MCF 10A (cell line): ENCODE measurements at regions of chr4 and their contacts with region 1.

Region 1: GRCh38 chr4:108683479-108683878 is 33.1 kb downstream of the OSTC start:
- DNase-seq: peak; percentile 53
- H3K4me3 Mint-ChIP-seq: no peak overlapping the region
- H3K27ac Mint-ChIP-seq: no peak overlapping the region
- H3K4me1 Mint-ChIP-seq: no peaks in the 10 kb centered on the region
- H3K27me3 Mint-ChIP-seq: no peaks in the 10 kb centered on the region
- CTCF ChIP-seq: peak; percentile 30

Region 2: DNA sequence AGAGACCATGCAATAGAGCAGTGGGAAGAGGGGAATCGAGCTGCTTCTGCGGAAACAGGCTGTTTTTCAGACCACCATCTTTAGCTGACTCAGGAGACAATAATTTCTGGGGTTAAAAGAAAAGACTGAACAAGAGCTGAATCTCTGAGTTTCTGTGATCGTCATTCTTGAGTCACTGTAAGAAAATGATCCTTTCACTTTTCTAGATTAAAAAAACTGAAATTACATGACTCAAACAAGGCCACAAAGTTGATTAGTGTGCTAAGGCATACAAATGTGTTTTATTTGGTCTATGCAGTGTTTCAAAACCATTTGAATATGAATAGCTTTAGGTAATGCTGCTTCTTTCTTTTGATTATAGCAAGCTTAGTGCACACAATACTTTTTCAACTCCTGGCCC is 257.5 kb before region 1 on chr4:
- CTCF ChIA-PET with region 1: no interaction called
- POLR2A ChIA-PET with region 1: no interaction called
- intact Hi-C with region 1: no loop called
- DNase-seq: no peak
- H3K4me3 Mint-ChIP-seq: no peak overlapping the region
- H3K27ac Mint-ChIP-seq: no peak overlapping the region
- H3K4me1 Mint-ChIP-seq: no peaks in the 10 kb centered on the region
- H3K27me3 Mint-ChIP-seq: no peaks in the 10 kb centered on the region
- CTCF ChIP-seq: no peak

Region 3: GRCh38 chr4:108783665-108784463 is 100.4 kb after region 1 on chr4:
- CTCF ChIA-PET with region 1: interaction called, 3 read pairs
- POLR2A ChIA-PET with region 1: no interaction called
- intact Hi-C with region 1: loop called (anchors 1 kb)
- DNase-seq: peak; percentile 43
- H3K4me3 Mint-ChIP-seq: no peak overlapping the region
- H3K27ac Mint-ChIP-seq: no peak overlapping the region
- H3K4me1 Mint-ChIP-seq: no peaks in the 10 kb centered on the region
- H3K27me3 Mint-ChIP-seq: no peaks in the 10 kb centered on the region
- CTCF ChIP-seq: peak; percentile 49

Region 4: GRCh38 chr4:109406338-109406931 is 723.0 kb after region 1 on chr4:
- CTCF ChIA-PET with region 1: interaction called, 9 read pairs
- POLR2A ChIA-PET with region 1: no interaction called
- intact Hi-C with region 1: loop called (anchors 2 kb)
- DNase-seq: peak; percentile 68
- H3K4me3 Mint-ChIP-seq: no peak overlapping the region
- H3K27ac Mint-ChIP-seq: no peak overlapping the region
- H3K4me1 Mint-ChIP-seq: peaks cover 13% of the 10 kb centered on the region
- H3K27me3 Mint-ChIP-seq: no peaks in the 10 kb centered on the region
- CTCF ChIP-seq: peak; percentile 71